ENCODE measurements at regions of chr2 and their contacts with region 1.

Region 1: DNA sequence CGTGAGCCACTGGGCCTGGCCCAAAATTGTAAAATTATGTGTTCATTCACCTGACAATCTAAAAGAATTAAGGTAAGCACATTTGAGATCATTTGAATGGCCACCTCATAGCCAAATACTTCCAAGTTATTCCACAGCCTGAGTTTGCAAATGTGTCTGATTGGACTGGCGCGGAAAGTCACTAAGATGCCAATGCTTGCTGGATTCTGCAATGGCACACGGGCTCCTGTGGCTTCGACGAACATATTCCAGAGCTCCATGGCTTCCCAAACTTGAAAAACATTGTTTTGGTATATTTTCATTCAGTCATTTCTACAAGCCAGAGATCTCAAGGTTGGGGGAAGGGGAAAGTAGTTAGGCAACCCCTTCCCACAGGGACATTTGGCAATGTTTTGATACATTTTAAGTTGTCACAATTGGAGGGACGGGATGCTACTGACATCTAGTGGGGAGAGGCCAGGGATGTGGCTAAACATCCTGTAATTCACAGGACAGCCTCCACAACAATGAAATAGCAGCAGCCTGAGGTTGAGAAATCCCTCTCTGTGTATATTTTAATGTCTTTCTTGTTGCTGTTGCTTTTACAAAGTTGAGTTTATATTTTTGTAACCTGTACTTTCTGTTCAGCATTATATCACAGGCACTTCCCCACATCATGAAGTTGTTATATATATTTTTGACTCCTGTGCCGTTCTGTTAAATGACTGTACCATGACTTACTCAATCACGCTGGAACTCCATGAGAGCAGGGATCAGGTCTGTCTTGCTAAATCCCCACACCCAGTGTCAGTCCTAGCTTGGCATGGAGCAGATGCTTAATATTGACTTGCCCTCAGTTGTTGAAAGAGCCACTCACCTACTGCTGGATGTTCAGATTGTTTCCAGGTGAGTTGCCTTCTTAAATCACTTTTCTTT is 56.9 kb downstream of the COL4A4 start:
- DNase-seq: peak; percentile 60
- H3K4me3 ChIP-seq: no peak overlapping the region
- H3K27ac ChIP-seq: no peak overlapping the region
- H3K4me1 ChIP-seq: no peaks in the 10 kb centered on the region
- CTCF ChIP-seq: peak; percentile 89

Region 2: DNA sequence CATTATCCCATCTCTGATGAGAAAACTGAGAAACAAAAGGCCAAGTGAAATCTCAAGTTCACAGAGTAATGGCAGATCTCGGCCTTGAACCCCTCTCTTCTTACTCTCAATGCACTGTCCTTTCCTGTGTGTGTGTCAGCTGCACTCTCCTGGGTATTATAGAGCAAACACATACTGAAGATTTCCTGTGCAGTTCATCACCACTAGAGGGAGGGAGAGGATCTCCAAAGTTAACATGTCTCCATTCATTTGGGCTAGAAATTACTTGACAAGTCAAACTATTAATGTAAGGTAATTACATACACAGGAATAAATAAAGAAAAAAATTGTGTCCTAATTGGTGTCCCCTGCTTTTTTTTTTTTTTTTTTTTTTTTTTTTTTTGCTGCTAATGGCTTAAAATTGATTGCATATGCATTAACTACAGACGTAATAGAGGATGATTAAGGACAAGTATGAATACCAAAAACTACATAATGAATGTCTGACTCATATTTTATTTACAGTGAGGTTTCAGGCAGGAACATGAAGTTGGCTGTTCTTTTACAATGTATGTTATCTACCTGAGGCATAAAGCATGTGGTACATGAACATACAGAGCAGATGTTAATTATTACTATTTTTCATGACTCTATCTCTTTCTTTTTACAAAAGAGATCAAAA is 1438.4 kb before region 1 on chr2:
- CTCF ChIA-PET with region 1: no interaction called
- POLR2A ChIA-PET with region 1: no interaction called
- intact Hi-C with region 1: loop called (anchors 2 kb)
- DNase-seq: peak; percentile 70
- H3K4me3 ChIP-seq: no peak overlapping the region
- H3K27ac ChIP-seq: no peak overlapping the region
- H3K4me1 ChIP-seq: no peaks in the 10 kb centered on the region
- CTCF ChIP-seq: peak; percentile 86

Region 3: DNA sequence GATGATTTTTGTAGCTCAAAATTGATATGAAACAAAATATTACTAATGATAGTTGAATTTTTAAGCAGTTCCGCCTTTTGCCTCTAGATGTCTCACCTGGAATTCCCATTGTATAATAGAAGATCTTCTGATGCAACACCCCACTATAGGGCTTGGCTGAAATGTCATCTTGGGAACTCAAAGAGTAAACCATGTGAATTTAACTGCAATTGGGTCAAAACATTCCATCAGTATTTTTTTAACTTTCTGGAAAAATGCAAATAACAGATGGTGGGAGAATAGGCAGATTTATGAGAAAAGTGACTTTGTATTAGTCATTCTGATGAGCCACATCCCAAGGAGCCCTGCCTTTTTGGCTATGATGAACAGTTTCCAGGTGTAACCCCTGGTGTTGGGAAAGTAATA is 1217.7 kb before region 1 on chr2:
- CTCF ChIA-PET with region 1: no interaction called
- POLR2A ChIA-PET with region 1: no interaction called
- intact Hi-C with region 1: loop called (anchors 10 kb)
- DNase-seq: peak; percentile 45
- H3K4me3 ChIP-seq: no peak overlapping the region
- H3K27ac ChIP-seq: no peak overlapping the region
- H3K4me1 ChIP-seq: no peaks in the 10 kb centered on the region
- CTCF ChIP-seq: peak; percentile 88

Region 4: GRCh38 chr2:226215902-226216503 is 891.1 kb before region 1 on chr2:
- CTCF ChIA-PET with region 1: no interaction called
- POLR2A ChIA-PET with region 1: no interaction called
- intact Hi-C with region 1: loop called (anchors 10 kb)
- DNase-seq: peak; percentile 56
- H3K4me3 ChIP-seq: no peak overlapping the region
- H3K27ac ChIP-seq: no peak overlapping the region
- H3K4me1 ChIP-seq: no peaks in the 10 kb centered on the region
- CTCF ChIP-seq: peak; percentile 91

Region 5: GRCh38 chr2:226450141-226450540 is 657.0 kb before region 1 on chr2:
- CTCF ChIA-PET with region 1: no interaction called
- POLR2A ChIA-PET with region 1: no interaction called
- intact Hi-C with region 1: no loop called
- DNase-seq: no peak
- H3K4me3 ChIP-seq: no peak overlapping the region
- H3K27ac ChIP-seq: no peak overlapping the region
- H3K4me1 ChIP-seq: no peaks in the 10 kb centered on the region
- CTCF ChIP-seq: no peak

Region 6: DNA sequence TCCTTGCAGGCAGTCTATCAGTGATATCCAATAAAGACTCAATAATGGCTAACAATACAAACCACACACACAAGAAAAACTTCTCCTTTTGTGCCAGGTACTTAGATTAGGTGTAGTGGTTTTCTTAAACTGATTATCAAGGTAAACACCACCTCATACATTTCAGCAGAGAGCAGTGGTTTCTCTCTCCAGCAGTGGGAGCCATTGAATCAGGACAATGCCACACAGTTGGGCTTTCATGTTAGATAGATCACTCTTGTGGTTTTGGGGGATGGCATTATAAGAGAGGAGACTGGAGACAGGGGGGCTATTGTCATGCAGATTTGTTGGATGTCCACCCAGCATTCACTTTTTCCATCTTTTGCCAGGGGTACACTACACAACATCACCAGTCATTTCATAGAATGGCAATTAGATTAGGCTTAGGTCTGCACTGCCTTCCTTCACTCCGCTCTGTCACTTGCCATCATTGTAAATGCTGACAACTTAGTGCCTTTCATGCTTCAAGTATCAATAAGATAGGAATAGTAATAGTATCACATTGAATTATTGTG is 293.9 kb before region 1 on chr2:
- CTCF ChIA-PET with region 1: no interaction called
- POLR2A ChIA-PET with region 1: no interaction called
- intact Hi-C with region 1: loop called (anchors 2 kb)
- DNase-seq: peak; percentile 60
- H3K4me3 ChIP-seq: no peak overlapping the region
- H3K27ac ChIP-seq: no peak overlapping the region
- H3K4me1 ChIP-seq: no peaks in the 10 kb centered on the region
- CTCF ChIP-seq: peak; percentile 91

Region 7: DNA sequence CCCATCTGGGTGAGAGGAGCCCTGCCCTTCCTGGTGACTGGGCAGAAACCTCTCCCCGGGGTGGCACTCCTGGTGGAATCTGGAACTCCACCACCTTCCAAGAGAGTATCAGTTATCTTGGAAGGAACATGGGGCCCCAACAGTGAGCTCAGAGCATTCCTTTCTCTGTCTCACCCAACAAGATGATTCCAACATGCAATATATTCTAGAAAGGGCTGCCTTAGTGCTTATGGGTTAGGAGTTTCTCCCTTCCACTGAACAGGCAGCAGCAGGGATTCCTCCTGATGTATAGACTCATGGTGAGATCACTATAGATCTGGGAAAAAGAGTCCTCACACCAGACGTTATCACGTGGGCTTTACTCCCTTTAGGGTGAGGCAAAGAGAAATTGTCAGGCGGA is 90.2 kb before region 1 on chr2:
- CTCF ChIA-PET with region 1: no interaction called
- POLR2A ChIA-PET with region 1: no interaction called
- intact Hi-C with region 1: no loop called
- DNase-seq: no peak
- H3K4me3 ChIP-seq: no peak overlapping the region
- H3K27ac ChIP-seq: no peak overlapping the region
- H3K4me1 ChIP-seq: no peaks in the 10 kb centered on the region
- CTCF ChIP-seq: no peak

Region 8: GRCh38 chr2:227033471-227034148 is 73.5 kb before region 1 on chr2:
- CTCF ChIA-PET with region 1: no interaction called
- POLR2A ChIA-PET with region 1: no interaction called
- intact Hi-C with region 1: loop called (anchors 10 kb)
- DNase-seq: peak; percentile 37
- H3K4me3 ChIP-seq: no peak overlapping the region
- H3K27ac ChIP-seq: no peak overlapping the region
- H3K4me1 ChIP-seq: no peaks in the 10 kb centered on the region
- CTCF ChIP-seq: peak; percentile 87

Region 9: GRCh38 chr2:227256605-227257004 is 149.5 kb after region 1 on chr2:
- CTCF ChIA-PET with region 1: no interaction called
- POLR2A ChIA-PET with region 1: no interaction called
- intact Hi-C with region 1: no loop called
- DNase-seq: no peak
- H3K4me3 ChIP-seq: no peak overlapping the region
- H3K27ac ChIP-seq: no peak overlapping the region
- H3K4me1 ChIP-seq: no peaks in the 10 kb centered on the region
- CTCF ChIP-seq: no peak